ENCODE measurements at regions of chr2 and their contacts with region 1.

Region 1: DNA sequence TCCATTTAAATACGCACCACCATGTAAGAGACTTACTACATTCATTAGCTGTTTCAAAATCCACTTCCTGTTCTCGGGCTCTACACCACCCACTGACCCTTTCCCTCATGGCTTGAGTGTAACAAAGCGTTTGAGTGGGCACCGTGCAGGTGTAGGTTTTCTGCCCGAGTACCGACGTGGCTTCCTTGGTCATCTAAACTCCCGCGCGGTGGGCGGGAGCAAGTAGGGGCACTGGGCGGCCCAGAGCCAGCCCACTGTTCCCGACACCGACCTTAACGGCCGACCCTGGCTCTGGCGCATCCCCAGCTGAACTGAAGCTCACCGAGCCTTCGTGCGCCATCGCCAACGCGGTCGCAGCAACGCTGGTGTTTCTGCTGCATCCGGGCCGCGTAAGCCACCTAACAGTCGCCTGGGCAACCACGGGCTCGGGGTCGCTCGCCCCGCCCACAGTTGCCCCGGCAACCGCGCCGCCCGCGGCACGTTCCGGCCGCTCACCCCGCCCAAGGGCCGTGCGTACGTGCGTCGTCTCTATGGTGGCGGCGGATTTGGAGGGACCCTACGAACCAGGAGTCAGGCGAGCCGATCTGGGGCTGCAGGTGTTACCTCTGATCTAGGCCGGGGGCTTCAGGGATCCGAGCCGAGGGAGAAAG is at the starts of genes C2orf81 and WDR54:
- DNase-seq: peak; percentile 88 to 97 (median 96)
- H3K4me3 ChIP-seq: peak within 1 kb of the TSS; percentile 96
- H3K4me3 Mint-ChIP-seq: peak within 1 kb of the TSS; percentile 97 to 100 (median 98)
- H3K27ac ChIP-seq: peak within 1 kb of the TSS; percentile 98
- H3K27ac Mint-ChIP-seq: peak within 1 kb of the TSS; percentile 97 to 100 (median 100)
- H3K4me1 ChIP-seq: peaks cover 16% of the 10 kb centered on the region
- H3K4me1 Mint-ChIP-seq: peaks cover 13 to 26% (median 19%) of the 10 kb centered on the region in 3 donors
- H3K27me3 ChIP-seq: no peaks in the 10 kb centered on the region
- H3K27me3 Mint-ChIP-seq: peaks cover 0 to 7% of the 10 kb centered on the region in 2 donors
- total RNA-seq, gene C2orf81: 2.7 to 3.2 TPM
- total RNA-seq, gene WDR54: 75.5 to 86.6 TPM

Region 2: GRCh38 chr2:74391580-74392448 is 29.5 kb before region 1 on chr2:
- CTCF ChIA-PET with region 1: interaction called, 20 read pairs
- POLR2A ChIA-PET with region 1: no interaction called
- DNase-seq: peak; percentile 91 to 96 (median 93)
- H3K4me3 ChIP-seq: peak overlapping the region; percentile 79
- H3K4me3 Mint-ChIP-seq: peak overlapping the region in 5 of 7 donors; percentile 93 to 100 (median 97)
- H3K27ac ChIP-seq: peak overlapping the region; percentile 85
- H3K27ac Mint-ChIP-seq: peak overlapping the region; percentile 81 to 100 (median 100)
- H3K4me1 ChIP-seq: peaks cover 39% of the 10 kb centered on the region
- H3K4me1 Mint-ChIP-seq: peaks cover 0 to 8% (median 6%) of the 10 kb centered on the region in 3 donors
- H3K27me3 ChIP-seq: no peaks in the 10 kb centered on the region
- H3K27me3 Mint-ChIP-seq: peaks cover 4 to 7% of the 10 kb centered on the region in 2 donors